MCF 10A (cell line): ENCODE measurements at regions of chr5 and their contacts with region 1.

Region 1: DNA sequence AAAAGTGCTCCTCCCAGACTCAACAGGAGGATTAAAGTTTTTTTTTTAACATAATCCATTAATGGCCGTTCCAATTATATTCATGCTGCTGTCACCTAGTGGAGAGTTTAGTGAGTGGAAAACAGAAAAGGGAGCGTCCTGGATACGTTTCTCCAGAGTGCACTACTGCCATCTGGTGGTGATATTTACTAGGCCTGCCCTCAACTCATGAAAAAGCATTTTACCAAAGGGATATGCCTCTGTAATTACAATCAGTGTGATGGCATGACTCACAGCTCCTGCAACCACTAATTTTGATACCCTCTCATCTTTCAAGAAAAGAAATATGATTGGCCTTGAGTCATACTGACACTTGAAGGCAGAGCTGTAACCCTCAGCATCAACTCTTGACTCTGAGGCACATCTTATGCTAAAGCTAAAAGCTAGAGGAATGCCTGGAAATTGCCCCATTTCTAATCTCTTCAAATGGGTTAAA is 20.0 kb downstream of the MINAR2 start:
- DNase-seq: peak; percentile 97
- H3K4me3 Mint-ChIP-seq: no peak overlapping the region
- H3K27ac Mint-ChIP-seq: no peak overlapping the region
- H3K4me1 Mint-ChIP-seq: peaks cover 5% of the 10 kb centered on the region
- H3K27me3 Mint-ChIP-seq: no peaks in the 10 kb centered on the region
- CTCF ChIP-seq: peak; percentile 99

Region 2: DNA sequence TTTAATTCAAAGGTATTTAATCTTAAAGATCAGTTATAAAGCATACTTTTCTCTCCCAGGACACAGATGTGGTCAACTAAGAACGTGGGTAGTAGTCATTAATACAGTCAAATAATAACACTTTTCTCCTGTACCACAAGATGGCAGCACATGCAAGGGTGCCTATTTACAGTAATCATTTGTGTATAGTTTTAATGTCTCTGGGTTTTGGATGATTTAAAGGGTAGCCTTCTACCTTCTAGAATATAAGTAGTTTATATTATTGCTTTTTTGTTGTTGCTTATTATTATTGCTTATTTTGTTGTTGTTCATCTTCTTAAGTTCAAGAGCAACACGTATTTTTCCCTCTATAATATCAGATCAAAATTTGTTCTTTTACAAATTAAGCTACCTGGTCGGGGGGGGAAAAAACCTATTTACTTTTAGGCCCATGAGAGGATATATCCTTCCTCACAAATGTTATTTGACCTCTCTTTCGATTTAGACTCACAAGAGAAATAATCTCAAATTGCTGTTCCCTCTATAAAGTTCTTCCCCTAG is 862.3 kb before region 1 on chr5:
- CTCF ChIA-PET with region 1: interaction called, 41 read pairs
- POLR2A ChIA-PET with region 1: no interaction called
- intact Hi-C with region 1: loop called (anchors 1 kb)
- DNase-seq: peak; percentile 90
- H3K4me3 Mint-ChIP-seq: no peak overlapping the region
- H3K27ac Mint-ChIP-seq: no peak overlapping the region
- H3K4me1 Mint-ChIP-seq: no peaks in the 10 kb centered on the region
- H3K27me3 Mint-ChIP-seq: no peaks in the 10 kb centered on the region
- CTCF ChIP-seq: peak; percentile 85

Region 3: GRCh38 chr5:129172580-129172979 is 595.4 kb before region 1 on chr5:
- CTCF ChIA-PET with region 1: interaction called, 23 read pairs
- POLR2A ChIA-PET with region 1: no interaction called
- intact Hi-C with region 1: loop called (anchors 1 kb)
- DNase-seq: peak; percentile 45
- H3K4me3 Mint-ChIP-seq: no peak overlapping the region
- H3K27ac Mint-ChIP-seq: no peak overlapping the region
- H3K4me1 Mint-ChIP-seq: no peaks in the 10 kb centered on the region
- H3K27me3 Mint-ChIP-seq: peaks cover 50% of the 10 kb centered on the region
- CTCF ChIP-seq: peak; percentile 38

Region 4: GRCh38 chr5:129541644-129542251 is 226.2 kb before region 1 on chr5:
- CTCF ChIA-PET with region 1: interaction called, 11 read pairs
- POLR2A ChIA-PET with region 1: no interaction called
- intact Hi-C with region 1: loop called (anchors 1 kb)
- DNase-seq: peak; percentile 74
- H3K4me3 Mint-ChIP-seq: no peak overlapping the region
- H3K27ac Mint-ChIP-seq: no peak overlapping the region
- H3K4me1 Mint-ChIP-seq: no peaks in the 10 kb centered on the region
- H3K27me3 Mint-ChIP-seq: peaks cover 16% of the 10 kb centered on the region
- CTCF ChIP-seq: peak; percentile 60

Region 5: DNA sequence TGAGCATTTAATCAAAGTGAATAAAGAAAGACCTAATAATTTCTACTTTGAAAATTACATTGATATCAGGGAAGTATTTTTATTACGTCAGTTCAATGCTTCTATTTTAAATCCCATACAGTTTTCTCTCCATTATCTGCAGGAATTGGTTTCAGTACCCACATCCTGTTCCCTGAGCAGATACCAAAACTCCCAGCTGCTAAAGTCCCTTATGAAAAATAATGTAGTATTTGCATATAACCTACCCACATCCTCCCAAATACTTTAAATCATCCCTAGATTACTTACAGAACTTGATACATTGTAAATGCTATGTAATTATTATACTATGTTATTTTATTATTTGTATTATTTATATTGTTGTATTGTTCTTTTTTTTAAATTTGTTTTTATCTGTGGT is 145.4 kb before region 1 on chr5:
- CTCF ChIA-PET with region 1: no interaction called
- POLR2A ChIA-PET with region 1: no interaction called
- intact Hi-C with region 1: no loop called
- DNase-seq: no peak
- H3K4me3 Mint-ChIP-seq: no peak overlapping the region
- H3K27ac Mint-ChIP-seq: no peak overlapping the region
- H3K4me1 Mint-ChIP-seq: peaks cover 15% of the 10 kb centered on the region
- H3K27me3 Mint-ChIP-seq: peaks cover 18% of the 10 kb centered on the region
- CTCF ChIP-seq: no peak

Region 6: GRCh38 chr5:129821477-129822131 is 53.7 kb after region 1 on chr5:
- CTCF ChIA-PET with region 1: interaction called, 20 read pairs
- POLR2A ChIA-PET with region 1: interaction called, 3 read pairs
- intact Hi-C with region 1: no loop called
- DNase-seq: no peak
- H3K4me3 Mint-ChIP-seq: no peak overlapping the region
- H3K27ac Mint-ChIP-seq: no peak overlapping the region
- H3K4me1 Mint-ChIP-seq: no peaks in the 10 kb centered on the region
- H3K27me3 Mint-ChIP-seq: no peaks in the 10 kb centered on the region
- CTCF ChIP-seq: no peak

Region 7: GRCh38 chr5:130141659-130142320 is 373.8 kb after region 1 on chr5:
- CTCF ChIA-PET with region 1: no interaction called
- POLR2A ChIA-PET with region 1: no interaction called
- intact Hi-C with region 1: loop called (anchors 2 kb)
- DNase-seq: peak; percentile 60
- H3K4me3 Mint-ChIP-seq: no peak overlapping the region
- H3K27ac Mint-ChIP-seq: no peak overlapping the region
- H3K4me1 Mint-ChIP-seq: peaks cover 19% of the 10 kb centered on the region
- H3K27me3 Mint-ChIP-seq: no peaks in the 10 kb centered on the region
- CTCF ChIP-seq: peak; percentile 47